AG04449 (cell line): ENCODE measurements at regions of chr19 and their contacts with region 1.

Region 1: GRCh38 chr19:13861732-13862531 is 15.0 kb upstream of the NANOS3 start:
- DNase-seq: peak; percentile 77
- H3K4me3 ChIP-seq: peak overlapping the region; percentile 55
- CTCF ChIP-seq: peak; percentile 97

Region 2: DNA sequence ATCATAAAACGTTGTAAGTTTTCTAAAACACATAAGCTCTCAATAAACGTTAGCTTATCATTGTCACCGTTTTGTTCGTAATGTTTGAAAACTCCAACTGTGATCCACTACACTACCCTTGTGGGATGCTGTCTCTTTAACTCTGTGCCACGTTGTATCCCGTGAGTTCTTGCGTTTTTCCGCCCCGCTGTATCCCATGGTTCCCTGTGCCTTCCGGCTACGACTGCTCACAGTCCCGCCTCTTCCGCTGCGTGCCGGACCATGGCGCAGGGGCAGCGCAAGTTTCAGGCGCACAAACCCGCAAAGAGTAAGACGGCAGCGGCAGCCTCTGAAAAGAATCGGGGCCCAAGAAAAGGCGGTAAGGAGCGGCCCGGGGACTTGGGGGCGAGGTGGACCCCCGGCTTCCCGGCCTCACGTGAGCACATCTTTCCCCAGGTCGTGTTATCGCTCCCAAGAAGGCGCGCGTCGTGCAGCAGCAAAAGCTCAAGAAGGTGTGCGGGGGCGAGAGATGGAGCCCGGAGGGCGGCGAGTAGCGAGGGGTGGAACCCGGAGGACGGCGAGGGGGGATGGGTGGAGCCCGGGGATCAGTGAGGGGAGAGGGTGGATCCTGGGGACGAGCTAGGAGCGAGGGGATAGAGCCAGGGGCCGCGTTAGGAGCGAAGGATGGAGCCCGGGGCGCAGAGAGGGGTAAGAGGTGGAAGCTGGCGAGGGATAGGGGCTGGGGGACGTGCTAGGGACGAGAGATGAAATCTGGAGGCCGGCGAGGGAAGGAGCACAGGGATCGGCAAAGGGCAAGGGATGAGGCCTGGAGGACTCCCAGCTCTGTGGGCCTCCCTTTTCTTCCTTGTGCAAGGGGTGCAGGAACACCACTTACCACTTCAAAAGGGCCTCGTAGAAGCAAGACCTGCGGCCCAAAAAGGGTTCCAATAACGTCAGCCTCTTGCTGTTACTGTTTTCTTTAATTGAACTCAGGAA is 87.4 kb before region 1 on chr19 and contains the start of gene C19orf53:
- CTCF ChIA-PET with region 1: interaction called, 6 read pairs
- POLR2A ChIA-PET with region 1: interaction called, 16 read pairs
- DNase-seq: peak; percentile 73
- H3K4me3 ChIP-seq: peak within 1 kb of the TSS; percentile 96
- CTCF ChIP-seq: no peak

Region 3: DNA sequence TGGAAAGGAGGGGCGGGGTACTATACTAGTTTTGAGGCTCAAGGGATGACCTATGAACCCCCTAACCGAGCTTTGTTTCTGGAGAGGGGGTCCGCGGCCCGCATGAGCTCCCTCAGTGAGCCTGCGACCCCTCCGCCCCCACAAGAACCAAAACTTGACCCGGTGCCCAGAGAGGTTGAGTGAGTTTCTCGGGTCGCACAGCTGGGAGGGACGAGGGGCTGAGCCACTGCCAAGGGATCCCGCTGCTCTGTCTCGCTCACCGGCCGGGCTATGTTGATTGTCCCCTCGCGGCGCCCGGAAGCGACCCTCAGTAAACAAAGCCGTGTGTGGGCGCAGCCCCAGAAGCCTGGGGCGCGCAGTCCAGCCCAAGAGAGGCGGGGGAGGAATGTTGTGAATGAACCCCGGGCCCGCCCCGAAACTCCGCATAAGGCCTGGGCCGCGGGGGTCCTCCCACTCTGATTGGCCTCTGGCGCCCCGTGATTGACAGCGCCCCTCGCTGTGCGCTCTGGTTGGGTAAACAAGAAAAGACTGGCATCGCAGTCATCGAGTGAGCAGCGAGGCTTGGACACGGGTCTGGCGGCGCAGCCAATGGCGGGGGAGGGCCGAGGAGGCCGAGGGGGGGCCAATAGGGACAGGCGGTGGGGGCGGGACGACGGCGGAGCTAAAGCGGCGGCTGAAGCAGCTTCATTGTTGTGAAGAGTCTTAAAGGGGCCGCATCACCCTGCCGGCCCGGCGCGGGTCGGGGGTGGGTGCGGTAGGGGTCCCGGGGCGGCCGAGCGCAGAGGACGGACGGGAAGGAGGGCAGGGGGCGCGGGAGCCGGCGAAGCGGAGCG is 67.0 kb before region 1 on chr19 and contains the start of gene ZSWIM4:
- CTCF ChIA-PET with region 1: interaction called, 138 read pairs
- POLR2A ChIA-PET with region 1: interaction called, 4 read pairs
- DNase-seq: peak; percentile 95
- H3K4me3 ChIP-seq: peak within 1 kb of the TSS; percentile 94
- CTCF ChIP-seq: no peak

Region 4: GRCh38 chr19:13839130-13839937 is 22.6 kb before region 1 on chr19:
- CTCF ChIA-PET with region 1: interaction called, 61 read pairs
- POLR2A ChIA-PET with region 1: interaction called, 149 read pairs
- DNase-seq: no peak
- H3K4me3 ChIP-seq: peak overlapping the region; percentile 91
- CTCF ChIP-seq: peak; percentile 21

Region 5: DNA sequence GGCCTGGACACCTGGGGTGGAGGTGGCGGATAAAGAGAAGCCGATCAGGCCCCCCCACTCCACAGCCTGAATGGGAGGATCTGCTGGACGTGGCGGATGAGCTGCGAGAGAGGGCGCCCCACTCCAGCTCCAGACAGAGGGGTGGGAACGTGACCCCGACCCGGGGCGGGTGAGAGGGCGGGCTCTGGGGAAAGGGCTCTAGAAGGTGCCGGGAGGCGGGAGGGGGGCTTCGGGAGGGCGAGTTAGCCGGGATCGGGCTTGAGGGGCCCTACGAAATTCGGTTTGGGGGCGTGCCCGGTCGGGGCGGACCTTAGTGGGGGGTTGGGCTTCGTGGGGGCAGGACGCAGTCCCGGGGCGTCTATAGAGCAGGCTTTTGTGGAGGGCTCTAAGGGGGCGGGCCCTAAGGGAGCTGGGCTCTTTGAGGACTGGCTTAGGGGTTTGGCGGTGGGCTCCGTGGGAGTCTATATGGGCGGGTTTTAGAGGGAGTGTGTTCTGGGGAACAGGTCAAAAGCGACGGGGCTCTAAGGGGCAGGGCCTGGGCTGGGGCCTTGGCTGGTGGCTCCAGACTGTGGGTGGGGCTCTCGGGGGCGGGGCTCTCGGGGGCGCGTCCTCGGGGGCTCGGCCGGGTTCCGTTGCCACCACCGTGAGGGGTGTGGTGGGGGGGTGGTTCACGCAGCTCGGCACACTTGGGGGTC is 10.9 kb after region 1 on chr19:
- CTCF ChIA-PET with region 1: interaction called, 29 read pairs
- POLR2A ChIA-PET with region 1: no interaction called
- DNase-seq: no peak
- H3K4me3 ChIP-seq: peak overlapping the region; percentile 18; the same call in 1 of the 2 replicates
- CTCF ChIP-seq: no peak